Transverse colon (tissue), 4 donors: ENCODE measurements at regions of chr3 and their contacts with region 1.

Region 1: GRCh38 chr3:72847751-72848702 is at the start of gene SHQ1:
- DNase-seq: peak; percentile 98
- H3K4me3 ChIP-seq: peak within 1 kb of the TSS; percentile 75 to 93 (median 84)
- H3K27ac ChIP-seq: peak within 1 kb of the TSS; percentile 79 to 90 (median 86)
- H3K4me1 ChIP-seq: peaks cover 7 to 35% (median 14%) of the 10 kb centered on the region in 4 donors
- H3K27me3 ChIP-seq: no peaks in the 10 kb centered on the region
- CTCF ChIP-seq: no peak
- EP300 ChIP-seq: no peak
- POLR2A ChIP-seq: peak; percentile 25
- total RNA-seq, gene SHQ1: 4.9 to 21.3 (median 13.1) TPM

Region 2: GRCh38 chr3:71725279-71725991 is 1122.6 kb before region 1 on chr3 and contains the start of gene EIF4E3:
- in situ Hi-C with region 1: loop called in 2 of 4 experiments (anchors 25 kb)
- intact Hi-C with region 1: no loop called
- DNase-seq: peak; percentile 42
- H3K4me3 ChIP-seq: peak within 1 kb of the TSS; percentile 78 to 95 (median 90)
- H3K27ac ChIP-seq: peak within 1 kb of the TSS; percentile 80 to 90 (median 88)
- H3K4me1 ChIP-seq: peaks cover 11 to 44% (median 16%) of the 10 kb centered on the region in 4 donors
- H3K27me3 ChIP-seq: no peaks in the 10 kb centered on the region
- CTCF ChIP-seq: no peak
- EP300 ChIP-seq: no peak
- POLR2A ChIP-seq: no peak
- total RNA-seq, gene EIF4E3: 6.0 to 35.6 (median 19.4) TPM

Region 3: DNA sequence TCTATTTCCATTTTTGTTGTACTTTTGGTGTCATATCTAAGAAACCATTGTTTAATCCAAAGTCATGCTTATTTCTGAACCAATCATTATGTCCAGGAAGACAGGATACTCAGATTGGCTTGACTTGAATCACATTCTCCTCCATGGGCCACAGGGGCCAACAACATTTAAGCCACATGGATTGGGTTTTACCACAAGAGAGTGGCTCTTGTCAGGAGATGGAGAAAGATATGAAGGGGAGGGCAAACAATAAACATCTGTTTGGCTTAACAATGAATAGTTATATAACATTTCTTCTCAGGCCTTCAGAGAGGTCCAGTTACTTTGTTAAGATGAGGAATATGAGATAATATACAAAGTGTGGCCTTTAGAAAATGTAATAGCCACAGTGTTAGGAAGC is 84.4 kb after region 1 on chr3:
- in situ Hi-C with region 1: no loop called
- intact Hi-C with region 1: no loop called
- DNase-seq: no peak
- H3K4me3 ChIP-seq: no peak overlapping the region
- H3K27ac ChIP-seq: no peak overlapping the region
- H3K4me1 ChIP-seq: peaks cover 0 to 9% (median 3%) of the 10 kb centered on the region in 4 donors
- H3K27me3 ChIP-seq: no peaks in the 10 kb centered on the region
- CTCF ChIP-seq: no peak
- EP300 ChIP-seq: no peak
- POLR2A ChIP-seq: no peak

Region 4: GRCh38 chr3:72996473-72997333 is 148.7 kb after region 1 on chr3 and contains the start of gene PPP4R2:
- in situ Hi-C with region 1: no loop called
- intact Hi-C with region 1: loop called (anchors 5 kb)
- DNase-seq: peak; percentile 90
- H3K4me3 ChIP-seq: peak within 1 kb of the TSS; percentile 74 to 93 (median 76)
- H3K27ac ChIP-seq: peak within 1 kb of the TSS; percentile 96 to 99 (median 98)
- H3K4me1 ChIP-seq: peaks cover 20 to 49% (median 37%) of the 10 kb centered on the region in 4 donors
- H3K27me3 ChIP-seq: no peaks in the 10 kb centered on the region
- CTCF ChIP-seq: no peak
- EP300 ChIP-seq: no peak
- POLR2A ChIP-seq: peak; percentile 84
- total RNA-seq, gene PPP4R2: 14.5 to 55.6 (median 36.9) TPM

Region 5: DNA sequence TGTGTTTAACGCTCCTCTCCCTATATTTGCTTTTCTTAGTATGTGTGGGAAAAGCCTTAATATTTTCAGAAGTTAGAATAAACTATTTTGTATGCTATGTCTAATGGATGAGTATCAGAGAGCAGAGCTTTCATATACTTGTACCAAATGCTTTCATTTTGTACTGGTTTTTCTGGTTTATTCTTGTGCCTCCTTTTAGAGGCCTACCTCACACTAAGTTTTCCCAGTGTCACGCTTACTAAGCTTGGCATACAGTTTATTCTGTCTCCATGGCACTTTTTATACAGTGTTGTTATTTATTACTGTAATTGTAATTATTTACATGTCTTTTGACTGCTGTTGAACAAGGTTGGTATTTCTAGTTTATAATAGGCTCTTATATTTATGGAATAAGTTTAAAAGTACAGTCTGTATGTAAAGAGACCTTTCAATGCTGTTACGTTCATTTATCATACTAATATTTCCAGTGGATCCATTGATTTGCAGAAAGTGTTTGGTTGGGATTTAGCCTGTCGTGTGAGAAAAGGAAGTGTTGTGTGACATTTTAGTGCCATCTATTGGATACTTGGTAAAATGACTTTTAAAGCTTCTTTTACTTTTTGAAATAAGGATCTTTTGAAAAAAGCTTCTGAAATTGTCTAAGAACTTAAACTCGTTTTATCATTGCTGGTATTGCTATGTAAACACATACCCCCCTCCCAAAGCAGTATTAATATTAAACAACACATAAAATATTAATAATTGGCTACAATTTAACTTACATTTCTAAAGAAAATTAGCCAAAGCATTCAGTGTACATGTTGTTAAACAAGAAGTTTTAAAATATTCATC is 208.2 kb after region 1 on chr3:
- in situ Hi-C with region 1: loop called in 1 of 4 experiments (anchors 25 kb)
- intact Hi-C with region 1: no loop called
- DNase-seq: no peak
- H3K4me3 ChIP-seq: no peak overlapping the region
- H3K27ac ChIP-seq: peak overlapping the region in 3 of 4 donors; percentile 18 to 52 (median 49)
- H3K4me1 ChIP-seq: peaks cover 8 to 25% (median 22%) of the 10 kb centered on the region in 4 donors
- H3K27me3 ChIP-seq: no peaks in the 10 kb centered on the region
- CTCF ChIP-seq: peak; percentile 47 to 66 (median 57)
- EP300 ChIP-seq: no peak
- POLR2A ChIP-seq: no peak